ENCODE measurements at regions of chr1 and their contacts with region 1.

Region 1: GRCh38 chr1:205977402-205978014 is 25.7 kb downstream of the RAB7B start:
- DNase-seq: peak; percentile 82
- ATAC-seq: peak; percentile 86
- H3K4me3 Mint-ChIP-seq: no peak overlapping the region
- H3K27ac Mint-ChIP-seq: no peak overlapping the region
- H3K4me1 Mint-ChIP-seq: peaks cover 5% of the 10 kb centered on the region; the same call in 1 of the 2 replicates
- H3K27me3 Mint-ChIP-seq: peaks cover 3% of the 10 kb centered on the region; the same call in 1 of the 2 replicates
- CTCF ChIP-seq: peak; percentile 93

Region 2: GRCh38 chr1:205658943-205659581 is 318.4 kb before region 1 on chr1:
- CTCF ChIA-PET with region 1: interaction called, 32 read pairs
- POLR2A ChIA-PET with region 1: no interaction called
- DNase-seq: peak; percentile 91
- ATAC-seq: peak; percentile 84
- H3K4me3 Mint-ChIP-seq: no peak overlapping the region
- H3K27ac Mint-ChIP-seq: peak overlapping the region; percentile 88; the same call in 1 of the 2 replicates
- H3K4me1 Mint-ChIP-seq: peaks cover 35% of the 10 kb centered on the region
- H3K27me3 Mint-ChIP-seq: no peaks in the 10 kb centered on the region
- CTCF ChIP-seq: peak; percentile 83

Region 3: DNA sequence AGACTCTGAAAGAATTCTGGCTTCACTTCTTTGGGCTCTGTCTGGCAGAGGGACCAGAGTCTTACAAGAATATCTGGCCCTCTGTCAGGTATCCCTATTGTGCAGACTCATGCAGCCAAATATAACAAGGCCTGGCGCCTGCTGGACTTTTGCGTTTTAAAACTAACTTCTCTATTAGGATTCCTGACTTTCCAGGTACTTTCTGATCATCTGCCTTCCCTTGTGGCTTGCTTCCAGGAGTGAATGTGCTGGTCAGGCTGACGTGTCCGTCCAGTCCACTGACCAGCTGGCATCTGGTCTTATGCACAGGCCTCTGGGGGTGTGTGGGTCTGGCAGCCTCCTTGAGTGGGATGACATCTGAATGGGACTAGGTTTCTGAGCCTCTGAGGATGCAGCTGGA is 193.6 kb before region 1 on chr1:
- CTCF ChIA-PET with region 1: interaction called, 23 read pairs
- POLR2A ChIA-PET with region 1: no interaction called
- DNase-seq: no peak
- ATAC-seq: no peak
- H3K4me3 Mint-ChIP-seq: no peak overlapping the region
- H3K27ac Mint-ChIP-seq: no peak overlapping the region
- H3K4me1 Mint-ChIP-seq: no peaks in the 10 kb centered on the region
- H3K27me3 Mint-ChIP-seq: peaks cover 9% of the 10 kb centered on the region
- CTCF ChIP-seq: no peak

Region 4: GRCh38 chr1:205827623-205828022 is 149.9 kb before region 1 on chr1:
- CTCF ChIA-PET with region 1: interaction called, 21 read pairs
- POLR2A ChIA-PET with region 1: no interaction called
- DNase-seq: no peak
- ATAC-seq: peak; percentile 68
- H3K4me3 Mint-ChIP-seq: no peak overlapping the region
- H3K27ac Mint-ChIP-seq: no peak overlapping the region
- H3K4me1 Mint-ChIP-seq: peaks cover 17% of the 10 kb centered on the region
- H3K27me3 Mint-ChIP-seq: peaks cover 3% of the 10 kb centered on the region; the same call in 1 of the 2 replicates
- CTCF ChIP-seq: no peak

Region 5: GRCh38 chr1:205925730-205926129 is 51.8 kb before region 1 on chr1:
- CTCF ChIA-PET with region 1: interaction called, 557 read pairs
- POLR2A ChIA-PET with region 1: no interaction called
- DNase-seq: no peak
- ATAC-seq: no peak
- H3K4me3 Mint-ChIP-seq: no peak overlapping the region
- H3K27ac Mint-ChIP-seq: no peak overlapping the region
- H3K4me1 Mint-ChIP-seq: peaks cover 6% of the 10 kb centered on the region; the same call in 1 of the 2 replicates
- H3K27me3 Mint-ChIP-seq: no peaks in the 10 kb centered on the region
- CTCF ChIP-seq: no peak

Region 6: GRCh38 chr1:205961405-205961804 is 16.1 kb before region 1 on chr1:
- CTCF ChIA-PET with region 1: interaction called, 45 read pairs
- POLR2A ChIA-PET with region 1: no interaction called
- DNase-seq: no peak
- ATAC-seq: no peak
- H3K4me3 Mint-ChIP-seq: no peak overlapping the region
- H3K27ac Mint-ChIP-seq: no peak overlapping the region
- H3K4me1 Mint-ChIP-seq: peaks cover 9% of the 10 kb centered on the region
- H3K27me3 Mint-ChIP-seq: no peaks in the 10 kb centered on the region; the same call in 1 of the 2 replicates
- CTCF ChIP-seq: no peak

Measured in WTC11 (cell line).